Endothelial cell of umbilical vein (primary cell): ENCODE measurements at regions of chr20 and their contacts with region 1.

Region 1: GRCh38 chr20:8608470-8608869 is 460.4 kb upstream of the PLCB4 start:
- DNase-seq: peak; percentile 12
- H3K4me3 ChIP-seq: no peak overlapping the region
- H3K27ac ChIP-seq: no peak overlapping the region
- H3K4me1 ChIP-seq: no peaks in the 10 kb centered on the region
- H3K27me3 ChIP-seq: no peaks in the 10 kb centered on the region
- CTCF ChIP-seq: no peak
- POLR2A ChIP-seq: no peak

Region 2: GRCh38 chr20:8473459-8473858 is 135.0 kb before region 1 on chr20:
- CTCF ChIA-PET with region 1: no interaction called
- POLR2A ChIA-PET with region 1: no interaction called
- dilution Hi-C with region 1: no loop called
- intact Hi-C with region 1: no loop called
- DNase-seq: no peak
- H3K4me3 ChIP-seq: no peak overlapping the region
- H3K27ac ChIP-seq: no peak overlapping the region
- H3K4me1 ChIP-seq: no peaks in the 10 kb centered on the region
- H3K27me3 ChIP-seq: no peaks in the 10 kb centered on the region
- CTCF ChIP-seq: no peak
- POLR2A ChIP-seq: no peak

Region 3: DNA sequence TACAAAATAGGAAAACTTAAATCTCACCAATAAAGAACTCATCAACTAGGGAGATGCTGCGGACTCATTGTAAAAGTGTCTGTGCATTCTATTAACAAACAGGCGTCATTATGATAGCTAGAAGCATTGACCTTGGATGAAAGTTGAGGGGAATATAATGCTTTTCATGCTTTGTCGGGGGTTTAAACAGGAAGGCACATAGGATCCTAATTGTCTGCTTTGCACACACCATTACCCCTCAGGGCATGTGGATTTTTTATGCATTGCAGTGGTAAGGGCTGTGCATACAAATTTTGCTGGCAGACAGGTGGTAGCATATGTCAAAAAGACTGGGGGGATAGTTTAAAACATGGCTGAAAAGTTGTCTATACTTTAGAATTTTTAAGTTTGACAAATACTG is 12.5 kb after region 1 on chr20:
- CTCF ChIA-PET with region 1: interaction called, 12 read pairs
- POLR2A ChIA-PET with region 1: no interaction called
- dilution Hi-C with region 1: no loop called
- intact Hi-C with region 1: no loop called
- DNase-seq: no peak
- H3K4me3 ChIP-seq: no peak overlapping the region
- H3K27ac ChIP-seq: no peak overlapping the region
- H3K4me1 ChIP-seq: no peaks in the 10 kb centered on the region
- H3K27me3 ChIP-seq: no peaks in the 10 kb centered on the region
- CTCF ChIP-seq: no peak
- POLR2A ChIP-seq: no peak

Region 4: GRCh38 chr20:8656335-8656734 is 47.9 kb after region 1 on chr20:
- CTCF ChIA-PET with region 1: no interaction called
- POLR2A ChIA-PET with region 1: no interaction called
- dilution Hi-C with region 1: no loop called
- intact Hi-C with region 1: no loop called
- DNase-seq: peak; percentile 95
- H3K4me3 ChIP-seq: no peak overlapping the region
- H3K27ac ChIP-seq: peak overlapping the region; percentile 65
- H3K4me1 ChIP-seq: peaks cover 32% of the 10 kb centered on the region
- H3K27me3 ChIP-seq: no peaks in the 10 kb centered on the region
- CTCF ChIP-seq: no peak
- POLR2A ChIP-seq: no peak